ENCODE measurements at regions of chr11 and their contacts with region 1.

Region 1: DNA sequence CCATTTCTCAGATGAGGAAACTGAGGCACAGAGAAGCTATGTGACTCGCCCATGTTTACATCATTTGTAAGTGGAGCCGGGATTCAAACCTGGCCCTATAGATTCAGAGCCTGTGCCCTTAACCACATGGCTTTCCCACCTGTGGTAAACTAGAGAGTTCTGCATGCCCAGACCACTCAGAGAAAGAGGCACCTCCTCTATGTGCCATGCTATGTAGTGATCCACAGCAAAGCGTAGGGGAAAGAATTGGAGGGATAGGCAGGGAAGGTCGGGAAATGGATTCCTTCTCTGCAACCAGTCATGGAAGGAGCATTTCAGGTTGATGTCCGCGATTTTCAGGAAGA is 15.4 kb upstream of the POU2AF2 start:
- DNase-seq: no peak
- ATAC-seq: peak; percentile 67
- H3K4me3 ChIP-seq: peak overlapping the region; percentile 62 to 63; a peak in 3 of 4 replicates
- H3K27ac ChIP-seq: no peak overlapping the region
- H3K4me1 ChIP-seq: peaks cover 0 to 3% of the 10 kb centered on the region in 2 experiments; a peak in 1 of 4 replicates
- H3K27me3 ChIP-seq: no peaks in the 10 kb centered on the region
- CTCF ChIP-seq: no peak
- POLR2A ChIP-seq: no peak
- RAD21 ChIP-seq: no peak

Region 2: GRCh38 chr11:110434952-110435779 is 794.9 kb before region 1 on chr11:
- CTCF ChIA-PET with region 1: interaction called, 10 read pairs
- POLR2A ChIA-PET with region 1: no interaction called
- RAD21 ChIA-PET with region 1: no interaction called
- intact Hi-C with region 1: loop called (anchors 1 kb)
- DNase-seq: peak; percentile 24
- ATAC-seq: peak; percentile 59
- H3K4me3 ChIP-seq: no peak overlapping the region
- H3K27ac ChIP-seq: no peak overlapping the region
- H3K4me1 ChIP-seq: peaks cover 30 to 42% of the 10 kb centered on the region in 2 experiments
- H3K27me3 ChIP-seq: no peaks in the 10 kb centered on the region
- CTCF ChIP-seq: peak; percentile 45 to 66 (median 64); a peak in 5 of 6 replicates
- POLR2A ChIP-seq: no peak
- RAD21 ChIP-seq: peak; percentile 37

Region 3: GRCh38 chr11:110463153-110463552 is 766.9 kb before region 1 on chr11:
- CTCF ChIA-PET with region 1: interaction called, 7 read pairs
- POLR2A ChIA-PET with region 1: no interaction called
- RAD21 ChIA-PET with region 1: interaction called in 1 of 2 experiments, 4 read pairs
- intact Hi-C with region 1: loop called (anchors 1 kb)
- DNase-seq: no peak
- ATAC-seq: peak; percentile 97
- H3K4me3 ChIP-seq: no peak overlapping the region
- H3K27ac ChIP-seq: no peak overlapping the region
- H3K4me1 ChIP-seq: no peaks in the 10 kb centered on the region
- H3K27me3 ChIP-seq: no peaks in the 10 kb centered on the region
- CTCF ChIP-seq: peak; percentile 39 to 64 (median 53)
- POLR2A ChIP-seq: no peak
- RAD21 ChIP-seq: peak; percentile 72

Region 4: GRCh38 chr11:110613197-110613918 is 616.7 kb before region 1 on chr11:
- CTCF ChIA-PET with region 1: no interaction called
- POLR2A ChIA-PET with region 1: no interaction called
- RAD21 ChIA-PET with region 1: no interaction called
- intact Hi-C with region 1: no loop called
- DNase-seq: no peak
- ATAC-seq: no peak
- H3K4me3 ChIP-seq: no peak overlapping the region
- H3K27ac ChIP-seq: no peak overlapping the region
- H3K4me1 ChIP-seq: no peaks in the 10 kb centered on the region
- H3K27me3 ChIP-seq: peaks cover 26% of the 10 kb centered on the region
- CTCF ChIP-seq: no peak
- POLR2A ChIP-seq: no peak
- RAD21 ChIP-seq: no peak

Region 5: DNA sequence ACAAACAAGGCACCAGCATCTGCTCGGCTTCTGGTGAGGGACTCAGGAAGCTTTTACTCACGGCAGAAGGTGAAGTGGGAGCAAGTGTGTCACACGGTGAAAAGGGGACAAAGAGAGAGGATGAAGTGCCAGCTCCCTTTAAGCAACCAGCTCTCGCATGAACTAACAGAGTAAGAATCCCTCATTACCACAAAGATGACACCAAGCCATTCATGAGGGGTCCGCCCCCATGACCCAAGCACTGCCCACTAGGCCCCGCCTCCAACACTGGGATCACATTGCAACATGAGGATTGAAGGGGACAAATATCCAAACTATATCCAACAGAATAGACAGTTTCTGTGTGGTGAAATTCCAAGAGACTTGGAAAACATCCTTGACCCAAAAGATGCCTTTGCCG is 182.7 kb before region 1 on chr11:
- CTCF ChIA-PET with region 1: no interaction called
- POLR2A ChIA-PET with region 1: no interaction called
- RAD21 ChIA-PET with region 1: no interaction called
- intact Hi-C with region 1: no loop called
- DNase-seq: no peak
- ATAC-seq: no peak
- H3K4me3 ChIP-seq: no peak overlapping the region
- H3K27ac ChIP-seq: no peak overlapping the region
- H3K4me1 ChIP-seq: no peaks in the 10 kb centered on the region
- H3K27me3 ChIP-seq: no peaks in the 10 kb centered on the region
- CTCF ChIP-seq: no peak
- POLR2A ChIP-seq: no peak
- RAD21 ChIP-seq: no peak

Region 6: GRCh38 chr11:111162305-111162704 is 67.8 kb before region 1 on chr11:
- CTCF ChIA-PET with region 1: no interaction called
- POLR2A ChIA-PET with region 1: no interaction called
- RAD21 ChIA-PET with region 1: no interaction called
- intact Hi-C with region 1: no loop called
- DNase-seq: no peak
- ATAC-seq: no peak
- H3K4me3 ChIP-seq: no peak overlapping the region
- H3K27ac ChIP-seq: no peak overlapping the region
- H3K4me1 ChIP-seq: no peaks in the 10 kb centered on the region
- H3K27me3 ChIP-seq: peaks cover 28% of the 10 kb centered on the region
- CTCF ChIP-seq: no peak
- POLR2A ChIP-seq: no peak
- RAD21 ChIP-seq: no peak

Region 7: GRCh38 chr11:111283945-111284481 is 53.9 kb after region 1 on chr11:
- CTCF ChIA-PET with region 1: no interaction called
- POLR2A ChIA-PET with region 1: no interaction called
- RAD21 ChIA-PET with region 1: no interaction called
- intact Hi-C with region 1: no loop called
- DNase-seq: no peak
- ATAC-seq: no peak
- H3K4me3 ChIP-seq: no peak overlapping the region
- H3K27ac ChIP-seq: no peak overlapping the region
- H3K4me1 ChIP-seq: no peaks in the 10 kb centered on the region
- H3K27me3 ChIP-seq: peaks cover 14% of the 10 kb centered on the region
- CTCF ChIP-seq: no peak
- POLR2A ChIP-seq: no peak
- RAD21 ChIP-seq: no peak

Measured in HCT116 (cell line).